GM12878 (cell line): ENCODE measurements at regions of chr7 and their contacts with region 1.

Region 1: DNA sequence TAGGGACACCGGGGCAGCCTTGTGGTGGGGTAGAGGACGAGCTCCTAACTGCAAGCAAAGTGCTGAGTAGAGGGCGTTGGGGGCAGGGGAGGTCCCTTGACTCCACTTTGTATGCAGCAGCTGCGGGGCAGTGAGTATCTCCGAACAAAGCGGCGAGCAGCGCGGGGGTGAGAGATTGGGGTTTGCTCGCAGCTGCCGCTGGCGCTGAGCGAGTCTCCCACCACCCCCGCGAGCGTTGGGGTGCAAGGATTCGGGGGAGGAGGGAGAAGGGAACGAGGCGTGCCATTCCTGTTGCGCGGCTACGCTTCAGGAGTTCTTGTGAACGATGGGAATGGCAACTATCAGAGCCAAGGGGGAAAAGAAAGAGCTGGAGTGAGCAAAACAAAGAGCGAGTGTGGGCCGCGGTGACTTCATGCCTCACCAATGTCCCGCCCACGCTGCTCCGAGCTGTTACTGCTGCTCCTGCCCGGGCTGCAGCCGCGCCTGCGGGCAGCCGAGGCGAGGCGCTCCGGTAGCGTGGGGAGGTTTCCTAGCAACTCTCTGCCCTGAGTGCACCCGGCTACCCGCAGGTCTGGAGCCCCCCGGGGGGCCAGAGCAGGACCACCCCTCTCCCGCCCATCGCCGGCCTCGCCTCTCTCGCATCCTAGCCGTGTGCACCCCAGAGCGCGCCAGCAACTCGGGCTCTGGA is at the start of gene ITGB8:
- DNase-seq: no peak
- ATAC-seq: peak; percentile 70
- H3K4me3 ChIP-seq: peak within 1 kb of the TSS; percentile 83
- H3K27ac ChIP-seq: peak within 1 kb of the TSS; percentile 87
- H3K4me1 ChIP-seq: peaks cover 19% of the 10 kb centered on the region
- H3K27me3 ChIP-seq: no peaks in the 10 kb centered on the region; a peak in 1 of 4 replicates
- CTCF ChIP-seq: 0 out of 6 replicates have a peak, but pooled peaks of 1 of the 3 experiments have one; percentile 12
- EP300 ChIP-seq: no peak
- POLR2A ChIP-seq: no peak; the same call in none of the 2 replicates
- RAD21 ChIP-seq: 0 out of 2 replicates have a peak, but pooled peaks have one; percentile 13
- polyA plus RNA-seq, gene ITGB8: 0.37 to 0.40 TPM

Region 2: DNA sequence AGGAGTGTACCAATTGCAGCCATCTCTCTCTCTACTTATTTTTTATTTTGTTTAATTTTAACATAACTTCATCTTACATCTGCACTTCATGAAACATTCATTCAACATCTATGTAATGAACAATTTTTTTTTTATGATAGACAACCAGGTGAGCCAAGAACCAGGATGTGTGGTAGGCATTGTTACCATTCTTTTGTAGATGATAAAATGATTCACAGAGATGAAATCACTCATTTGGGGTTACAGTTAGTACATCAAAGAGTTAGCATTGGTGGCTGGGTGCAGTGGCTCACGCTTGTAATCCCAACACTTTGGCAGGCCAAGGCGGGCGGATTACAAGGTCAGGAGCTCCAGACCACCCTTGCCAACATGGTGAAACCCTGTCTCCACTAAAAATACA is 1707.0 kb before region 1 on chr7:
- CTCF ChIA-PET with region 1: no interaction called
- POLR2A ChIA-PET with region 1: no interaction called
- RAD21 ChIA-PET with region 1: no interaction called
- SMC1A ChIA-PET with region 1: no interaction called
- in situ Hi-C with region 1: no loop called
- intact Hi-C with region 1: no loop called
- DNase-seq: no peak
- ATAC-seq: no peak
- H3K4me3 ChIP-seq: no peak overlapping the region
- H3K27ac ChIP-seq: no peak overlapping the region
- H3K4me1 ChIP-seq: no peaks in the 10 kb centered on the region
- H3K27me3 ChIP-seq: no peaks in the 10 kb centered on the region
- CTCF ChIP-seq: no peak
- EP300 ChIP-seq: no peak
- POLR2A ChIP-seq: no peak
- RAD21 ChIP-seq: no peak

Region 3: GRCh38 chr7:19747740-19748339 is 582.5 kb before region 1 on chr7:
- CTCF ChIA-PET with region 1: interaction called, 12 read pairs
- POLR2A ChIA-PET with region 1: interaction called, 4 read pairs
- RAD21 ChIA-PET with region 1: interaction called, 3 read pairs
- SMC1A ChIA-PET with region 1: interaction called, 3 read pairs
- in situ Hi-C with region 1: no loop called
- intact Hi-C with region 1: no loop called
- DNase-seq: no peak
- ATAC-seq: peak; percentile 76
- H3K4me3 ChIP-seq: no peak overlapping the region
- H3K27ac ChIP-seq: no peak overlapping the region
- H3K4me1 ChIP-seq: no peaks in the 10 kb centered on the region
- H3K27me3 ChIP-seq: no peaks in the 10 kb centered on the region
- CTCF ChIP-seq: peak; percentile 47 to 61 (median 47); a peak in 5 of 6 replicates
- EP300 ChIP-seq: no peak
- POLR2A ChIP-seq: no peak
- RAD21 ChIP-seq: peak; percentile 63

Region 4: DNA sequence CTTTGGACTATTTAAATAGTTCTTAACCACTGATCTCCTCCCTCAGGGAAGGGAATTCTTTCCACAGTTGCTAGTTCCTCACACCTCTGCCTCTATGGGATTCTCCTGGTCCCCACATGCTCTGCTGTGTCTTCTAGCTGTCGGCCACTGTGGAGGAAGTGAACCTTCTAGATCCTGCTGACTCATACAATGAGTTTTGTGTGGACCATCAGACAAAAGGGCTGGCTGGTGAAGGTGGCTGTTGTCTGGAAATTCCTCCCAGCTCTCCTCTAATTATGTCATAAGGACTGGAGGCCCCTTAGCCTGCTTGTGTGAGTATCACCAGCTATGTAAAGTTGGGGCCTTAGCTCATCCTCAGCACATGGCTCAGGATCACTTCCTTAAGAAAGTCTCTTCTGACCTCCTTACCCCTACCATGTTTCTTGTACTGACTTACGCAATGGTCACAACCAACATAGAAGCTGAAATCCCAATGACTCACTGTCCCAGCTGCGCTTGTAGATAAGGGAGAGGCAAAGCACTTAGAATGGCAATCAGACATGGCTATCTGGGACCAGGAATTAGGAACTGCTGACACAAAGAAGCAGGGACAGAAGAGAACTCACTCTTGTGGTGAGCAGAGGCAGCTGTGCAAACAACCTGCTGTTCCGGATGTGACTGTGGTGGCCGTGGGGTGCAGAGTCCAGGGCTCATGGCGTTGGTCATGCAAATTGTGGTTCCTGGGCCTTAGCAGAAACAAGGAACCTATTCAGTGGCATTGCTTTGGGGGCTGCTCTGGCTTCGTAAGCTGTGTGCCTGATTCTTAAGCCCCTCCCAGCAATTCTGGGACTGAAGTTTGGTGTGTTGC is 110.7 kb before region 1 on chr7:
- CTCF ChIA-PET with region 1: interaction called, 17 read pairs
- POLR2A ChIA-PET with region 1: interaction called, 25 read pairs
- RAD21 ChIA-PET with region 1: interaction called, 24 read pairs
- SMC1A ChIA-PET with region 1: interaction called, 23 read pairs
- in situ Hi-C with region 1: no loop called
- intact Hi-C with region 1: loop called (anchors 1 kb)
- DNase-seq: peak; percentile 99
- ATAC-seq: peak; percentile 72
- H3K4me3 ChIP-seq: peak overlapping the region; percentile 44; the same call in 1 of the 2 replicates
- H3K27ac ChIP-seq: peak overlapping the region; percentile 98
- H3K4me1 ChIP-seq: peaks cover 35% of the 10 kb centered on the region
- H3K27me3 ChIP-seq: no peaks in the 10 kb centered on the region
- CTCF ChIP-seq: peak in 1 of 3 experiments; percentile 14; a peak in 1 of 6 replicates
- EP300 ChIP-seq: peak; percentile 99 to 100
- POLR2A ChIP-seq: peak; percentile 74
- RAD21 ChIP-seq: peak; percentile 19; the same call in 1 of the 2 replicates

Region 5: GRCh38 chr7:20276705-20277472 is 53.5 kb before region 1 on chr7:
- CTCF ChIA-PET with region 1: no interaction called
- POLR2A ChIA-PET with region 1: no interaction called
- RAD21 ChIA-PET with region 1: no interaction called
- SMC1A ChIA-PET with region 1: no interaction called
- in situ Hi-C with region 1: no loop called
- intact Hi-C with region 1: no loop called
- DNase-seq: no peak
- ATAC-seq: no peak
- H3K4me3 ChIP-seq: no peak overlapping the region
- H3K27ac ChIP-seq: no peak overlapping the region
- H3K4me1 ChIP-seq: no peaks in the 10 kb centered on the region
- H3K27me3 ChIP-seq: no peaks in the 10 kb centered on the region
- CTCF ChIP-seq: no peak
- EP300 ChIP-seq: no peak
- POLR2A ChIP-seq: no peak
- RAD21 ChIP-seq: no peak

Region 6: DNA sequence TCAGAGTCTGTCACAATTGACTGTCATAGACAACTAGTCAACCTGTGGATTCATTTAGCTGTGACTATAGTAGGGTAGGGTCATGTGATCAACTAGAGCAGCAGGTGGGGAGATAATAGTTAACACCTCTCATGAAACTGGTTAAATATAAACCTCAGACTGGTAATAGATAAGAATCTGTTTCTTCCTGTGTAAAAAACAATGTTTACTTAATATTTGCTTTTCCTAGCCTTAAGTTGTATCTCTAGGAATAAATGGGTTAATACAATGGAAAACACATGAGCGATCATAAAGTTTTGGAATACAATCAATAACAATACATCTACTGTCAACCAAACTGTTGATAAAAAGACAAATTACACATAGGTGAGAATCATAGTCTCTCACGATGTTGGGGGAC is 43.1 kb before region 1 on chr7:
- CTCF ChIA-PET with region 1: interaction called, 6 read pairs
- POLR2A ChIA-PET with region 1: interaction called, 11 read pairs
- RAD21 ChIA-PET with region 1: interaction called, 11 read pairs
- SMC1A ChIA-PET with region 1: interaction called, 5 read pairs
- in situ Hi-C with region 1: no loop called
- intact Hi-C with region 1: loop called (anchors 1 kb)
- DNase-seq: no peak
- ATAC-seq: peak; percentile 52
- H3K4me3 ChIP-seq: no peak overlapping the region
- H3K27ac ChIP-seq: no peak overlapping the region
- H3K4me1 ChIP-seq: peaks cover 19% of the 10 kb centered on the region
- H3K27me3 ChIP-seq: no peaks in the 10 kb centered on the region
- CTCF ChIP-seq: no peak
- EP300 ChIP-seq: peak; percentile 53 to 74; a peak in 3 of 4 replicates
- POLR2A ChIP-seq: no peak
- RAD21 ChIP-seq: no peak

Region 7: DNA sequence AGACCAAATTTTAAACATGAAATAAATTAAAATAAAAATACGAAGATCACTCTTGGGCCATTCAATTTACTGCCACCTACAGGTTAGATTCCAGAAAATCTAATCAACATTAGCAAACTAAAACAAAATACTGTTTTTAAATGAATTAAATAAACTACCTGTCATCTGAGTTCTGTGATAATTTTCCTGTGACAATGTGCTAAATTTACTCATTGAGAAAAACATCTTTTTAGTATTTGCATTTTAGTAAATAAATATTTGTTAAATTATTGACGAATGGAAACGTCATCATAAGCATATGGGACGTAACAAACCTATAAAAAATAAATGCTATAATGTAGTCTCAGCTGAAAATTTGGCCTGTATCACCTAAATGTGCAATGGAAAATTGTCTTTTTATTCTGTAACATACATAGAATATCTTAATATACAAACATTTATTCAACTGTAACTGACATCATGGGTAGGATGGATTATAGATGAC is 72.4 kb after region 1 on chr7:
- CTCF ChIA-PET with region 1: interaction called, 23 read pairs
- POLR2A ChIA-PET with region 1: no interaction called
- RAD21 ChIA-PET with region 1: interaction called, 4 read pairs
- SMC1A ChIA-PET with region 1: interaction called, 7 read pairs
- in situ Hi-C with region 1: no loop called
- intact Hi-C with region 1: no loop called
- DNase-seq: no peak
- ATAC-seq: no peak
- H3K4me3 ChIP-seq: no peak overlapping the region
- H3K27ac ChIP-seq: no peak overlapping the region
- H3K4me1 ChIP-seq: no peaks in the 10 kb centered on the region
- H3K27me3 ChIP-seq: no peaks in the 10 kb centered on the region
- CTCF ChIP-seq: peak in 2 of 3 experiments; percentile 15 to 35; a peak in 2 of 6 replicates
- EP300 ChIP-seq: no peak
- POLR2A ChIP-seq: no peak
- RAD21 ChIP-seq: peak; percentile 23; the same call in 1 of the 2 replicates

Region 8: GRCh38 chr7:21011118-21011517 is 680.7 kb after region 1 on chr7:
- CTCF ChIA-PET with region 1: no interaction called
- POLR2A ChIA-PET with region 1: no interaction called
- RAD21 ChIA-PET with region 1: no interaction called
- SMC1A ChIA-PET with region 1: no interaction called
- in situ Hi-C with region 1: no loop called
- intact Hi-C with region 1: no loop called
- DNase-seq: no peak
- ATAC-seq: no peak
- H3K4me3 ChIP-seq: no peak overlapping the region
- H3K27ac ChIP-seq: no peak overlapping the region
- H3K4me1 ChIP-seq: no peaks in the 10 kb centered on the region
- H3K27me3 ChIP-seq: no peaks in the 10 kb centered on the region
- CTCF ChIP-seq: no peak
- EP300 ChIP-seq: no peak
- POLR2A ChIP-seq: no peak
- RAD21 ChIP-seq: no peak

Region 9: GRCh38 chr7:21169667-21170580 is 839.5 kb after region 1 on chr7:
- CTCF ChIA-PET with region 1: no interaction called
- POLR2A ChIA-PET with region 1: no interaction called
- RAD21 ChIA-PET with region 1: no interaction called
- SMC1A ChIA-PET with region 1: no interaction called
- in situ Hi-C with region 1: no loop called
- intact Hi-C with region 1: no loop called
- DNase-seq: no peak
- ATAC-seq: no peak
- H3K4me3 ChIP-seq: no peak overlapping the region
- H3K27ac ChIP-seq: no peak overlapping the region
- H3K4me1 ChIP-seq: no peaks in the 10 kb centered on the region
- H3K27me3 ChIP-seq: no peaks in the 10 kb centered on the region; a peak in 1 of 4 replicates
- CTCF ChIP-seq: no peak
- EP300 ChIP-seq: no peak
- POLR2A ChIP-seq: no peak
- RAD21 ChIP-seq: no peak